ENCODE measurements at regions of chr11 and their contacts with region 1.

Region 1: GRCh38 chr11:6443269-6444003 is 2.6 kb upstream of the HPX start:
- DNase-seq: no peak
- H3K4me3 ChIP-seq: no peak overlapping the region
- CTCF ChIP-seq: peak; percentile 91

Region 2: GRCh38 chr11:6333112-6333511 is 110.3 kb before region 1 on chr11:
- CTCF ChIA-PET with region 1: no interaction called
- POLR2A ChIA-PET with region 1: no interaction called
- DNase-seq: no peak
- H3K4me3 ChIP-seq: no peak overlapping the region
- CTCF ChIP-seq: no peak

Region 3: GRCh38 chr11:6389921-6390724 is 53.3 kb before region 1 on chr11 and contains the start of gene SMPD1:
- CTCF ChIA-PET with region 1: interaction called, 701 read pairs
- POLR2A ChIA-PET with region 1: no interaction called
- DNase-seq: peak; percentile 14
- H3K4me3 ChIP-seq: peak within 1 kb of the TSS; percentile 81
- CTCF ChIP-seq: no peak

Region 4: GRCh38 chr11:6411594-6412031 is 31.8 kb before region 1 on chr11:
- CTCF ChIA-PET with region 1: interaction called, 154 read pairs
- POLR2A ChIA-PET with region 1: no interaction called
- DNase-seq: no peak
- H3K4me3 ChIP-seq: no peak overlapping the region
- CTCF ChIP-seq: no peak

Region 5: DNA sequence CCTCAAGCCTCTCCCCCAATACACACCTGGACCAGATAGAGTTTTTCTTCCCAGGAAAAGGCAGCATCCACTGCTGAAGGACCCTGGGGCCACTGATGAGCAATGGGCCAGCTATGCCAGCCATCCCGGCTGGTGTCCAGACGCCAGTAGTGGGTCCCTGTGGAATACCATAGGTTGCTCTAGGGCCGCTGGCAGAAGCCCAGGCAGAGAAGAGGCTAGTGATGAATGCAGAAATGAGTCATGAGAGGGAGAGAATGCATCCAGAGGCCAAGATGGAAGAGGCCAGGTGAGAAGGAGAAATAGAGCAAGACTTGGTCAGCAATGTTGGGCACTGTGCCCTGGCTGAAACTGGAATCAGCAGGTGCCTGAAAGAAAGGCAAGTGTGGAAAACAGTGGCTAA is 11.6 kb before region 1 on chr11:
- CTCF ChIA-PET with region 1: interaction called, 192 read pairs
- POLR2A ChIA-PET with region 1: no interaction called
- DNase-seq: peak; percentile 45
- H3K4me3 ChIP-seq: no peak overlapping the region
- CTCF ChIP-seq: no peak

Region 6: GRCh38 chr11:6473481-6474422 is 30.3 kb after region 1 on chr11 and contains the start of gene TRIM3:
- CTCF ChIA-PET with region 1: interaction called, 19 read pairs
- POLR2A ChIA-PET with region 1: no interaction called
- DNase-seq: peak; percentile 10
- H3K4me3 ChIP-seq: peak within 1 kb of the TSS; percentile 77
- CTCF ChIP-seq: peak; percentile 40

Measured in AG04449 (cell line).